Activated CD4-positive, alpha-beta T cell treated with anti-CD3 and anti-CD28 coated beads for 36 hours (primary cell): ENCODE measurements at regions of chr19 and their contacts with region 1.

Region 1: GRCh38 chr19:9934132-9934950 is 2.0 kb downstream of the OLFM2 start:
- DNase-seq: peak; percentile 94
- ATAC-seq: peak; percentile 85
- H3K4me3 Mint-ChIP-seq: no peak overlapping the region
- H3K27ac Mint-ChIP-seq: no peak overlapping the region
- H3K4me1 Mint-ChIP-seq: peaks cover 25% of the 10 kb centered on the region
- H3K27me3 Mint-ChIP-seq: peaks cover 43% of the 10 kb centered on the region

Region 2: GRCh38 chr19:10000171-10000826 is 66.0 kb after region 1 on chr19:
- CTCF ChIA-PET with region 1: interaction called, 6 read pairs
- POLR2A ChIA-PET with region 1: interaction called, 7 read pairs
- intact Hi-C with region 1: loop called (anchors 1 kb)
- DNase-seq: peak; percentile 85
- ATAC-seq: peak; percentile 62
- H3K4me3 Mint-ChIP-seq: no peak overlapping the region
- H3K27ac Mint-ChIP-seq: no peak overlapping the region
- H3K4me1 Mint-ChIP-seq: peaks cover 8% of the 10 kb centered on the region
- H3K27me3 Mint-ChIP-seq: peaks cover 27% of the 10 kb centered on the region

Region 3: GRCh38 chr19:10021863-10022262 is 87.5 kb after region 1 on chr19:
- CTCF ChIA-PET with region 1: interaction called, 40 read pairs
- POLR2A ChIA-PET with region 1: no interaction called
- intact Hi-C with region 1: loop called (anchors 1 kb)
- DNase-seq: no peak
- ATAC-seq: no peak
- H3K4me3 Mint-ChIP-seq: no peak overlapping the region
- H3K27ac Mint-ChIP-seq: no peak overlapping the region
- H3K4me1 Mint-ChIP-seq: peaks cover 3% of the 10 kb centered on the region
- H3K27me3 Mint-ChIP-seq: peaks cover 13% of the 10 kb centered on the region

Region 4: GRCh38 chr19:10027158-10027693 is 92.9 kb after region 1 on chr19:
- CTCF ChIA-PET with region 1: interaction called, 40 read pairs
- POLR2A ChIA-PET with region 1: interaction called, 9 read pairs
- intact Hi-C with region 1: loop called (anchors 1 kb)
- DNase-seq: peak; percentile 10
- ATAC-seq: peak; percentile 45
- H3K4me3 Mint-ChIP-seq: no peak overlapping the region
- H3K27ac Mint-ChIP-seq: no peak overlapping the region
- H3K4me1 Mint-ChIP-seq: no peaks in the 10 kb centered on the region
- H3K27me3 Mint-ChIP-seq: peaks cover 10% of the 10 kb centered on the region

Region 5: DNA sequence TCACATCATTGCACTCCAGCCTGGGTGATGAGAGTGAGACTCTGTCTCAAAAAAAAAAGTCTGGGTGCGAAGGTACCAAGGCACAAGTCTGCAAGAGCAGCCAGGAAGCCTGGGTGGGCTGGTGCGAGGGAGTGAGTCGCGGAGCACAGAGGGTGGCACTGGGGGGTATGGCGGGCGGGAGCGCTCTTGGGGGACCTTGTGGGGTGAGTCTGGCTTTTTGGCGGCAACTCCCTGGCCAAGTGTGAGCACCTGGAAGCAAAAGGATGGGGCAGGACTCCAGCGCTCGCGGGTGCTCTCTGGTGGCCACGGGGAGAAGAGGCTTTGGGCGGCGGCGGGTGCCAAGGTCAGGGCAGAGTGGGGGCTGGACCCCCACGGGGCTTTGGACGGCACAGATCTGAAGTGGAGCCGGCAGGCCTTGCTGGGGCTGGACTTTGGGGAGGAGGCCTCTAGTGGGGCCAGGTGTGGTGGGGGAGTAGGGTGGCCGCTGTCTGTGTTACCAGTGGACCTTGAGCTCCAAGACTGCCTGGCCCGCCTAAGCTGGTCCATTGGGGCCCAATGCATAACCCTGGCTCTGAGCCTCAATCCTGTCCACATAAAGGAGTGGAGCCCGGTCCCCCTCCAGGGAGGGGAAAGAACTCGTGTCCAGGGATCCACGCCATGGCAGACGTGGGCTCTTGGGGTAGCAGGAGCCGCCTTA is 178.7 kb after region 1 on chr19:
- CTCF ChIA-PET with region 1: no interaction called
- POLR2A ChIA-PET with region 1: no interaction called
- intact Hi-C with region 1: loop called (anchors 2 to 5 kb)
- DNase-seq: peak; percentile 83
- ATAC-seq: peak; percentile 50
- H3K4me3 Mint-ChIP-seq: peak overlapping the region; percentile 68
- H3K27ac Mint-ChIP-seq: peak overlapping the region; percentile 90
- H3K4me1 Mint-ChIP-seq: peaks cover 59% of the 10 kb centered on the region
- H3K27me3 Mint-ChIP-seq: no peaks in the 10 kb centered on the region

Region 6: GRCh38 chr19:10380313-10381102 is 446.2 kb after region 1 on chr19 and contains the start of gene TYK2:
- CTCF ChIA-PET with region 1: no interaction called
- POLR2A ChIA-PET with region 1: no interaction called
- intact Hi-C with region 1: loop called (anchors 1 to 10 kb)
- DNase-seq: peak; percentile 97
- ATAC-seq: peak; percentile 99
- H3K4me3 Mint-ChIP-seq: peak within 1 kb of the TSS; percentile 86
- H3K27ac Mint-ChIP-seq: peak within 1 kb of the TSS; percentile 96
- H3K4me1 Mint-ChIP-seq: peaks cover 22% of the 10 kb centered on the region
- H3K27me3 Mint-ChIP-seq: no peaks in the 10 kb centered on the region
- total RNA-seq, gene TYK2: 151 to 197 TPM

Region 7: GRCh38 chr19:10388957-10389356 is 454.6 kb after region 1 on chr19:
- CTCF ChIA-PET with region 1: interaction called, 5 read pairs
- POLR2A ChIA-PET with region 1: no interaction called
- intact Hi-C with region 1: loop called (anchors 1 to 10 kb)
- DNase-seq: peak; percentile 89
- ATAC-seq: peak; percentile 57
- H3K4me3 Mint-ChIP-seq: no peak overlapping the region
- H3K27ac Mint-ChIP-seq: no peak overlapping the region
- H3K4me1 Mint-ChIP-seq: no peaks in the 10 kb centered on the region
- H3K27me3 Mint-ChIP-seq: no peaks in the 10 kb centered on the region